OCI-LY7 (cell line): ENCODE measurements at regions of chr5 and their contacts with region 1.

Region 1: GRCh38 chr5:1140171-1140817 is 28.4 kb upstream of the SLC12A7 start:
- DNase-seq: peak; percentile 90
- H3K4me3 ChIP-seq: no peak overlapping the region
- H3K27ac ChIP-seq: no peak overlapping the region
- H3K4me1 ChIP-seq: peaks cover 20% of the 10 kb centered on the region
- CTCF ChIP-seq: peak; percentile 92

Region 2: GRCh38 chr5:1052641-1053390 is 87.5 kb before region 1 on chr5:
- CTCF ChIA-PET with region 1: no interaction called
- POLR2A ChIA-PET with region 1: no interaction called
- intact Hi-C with region 1: loop called (anchors 1 kb)
- DNase-seq: peak; percentile 30
- H3K4me3 ChIP-seq: no peak overlapping the region
- H3K27ac ChIP-seq: no peak overlapping the region
- H3K4me1 ChIP-seq: no peaks in the 10 kb centered on the region
- CTCF ChIP-seq: peak; percentile 60

Region 3: DNA sequence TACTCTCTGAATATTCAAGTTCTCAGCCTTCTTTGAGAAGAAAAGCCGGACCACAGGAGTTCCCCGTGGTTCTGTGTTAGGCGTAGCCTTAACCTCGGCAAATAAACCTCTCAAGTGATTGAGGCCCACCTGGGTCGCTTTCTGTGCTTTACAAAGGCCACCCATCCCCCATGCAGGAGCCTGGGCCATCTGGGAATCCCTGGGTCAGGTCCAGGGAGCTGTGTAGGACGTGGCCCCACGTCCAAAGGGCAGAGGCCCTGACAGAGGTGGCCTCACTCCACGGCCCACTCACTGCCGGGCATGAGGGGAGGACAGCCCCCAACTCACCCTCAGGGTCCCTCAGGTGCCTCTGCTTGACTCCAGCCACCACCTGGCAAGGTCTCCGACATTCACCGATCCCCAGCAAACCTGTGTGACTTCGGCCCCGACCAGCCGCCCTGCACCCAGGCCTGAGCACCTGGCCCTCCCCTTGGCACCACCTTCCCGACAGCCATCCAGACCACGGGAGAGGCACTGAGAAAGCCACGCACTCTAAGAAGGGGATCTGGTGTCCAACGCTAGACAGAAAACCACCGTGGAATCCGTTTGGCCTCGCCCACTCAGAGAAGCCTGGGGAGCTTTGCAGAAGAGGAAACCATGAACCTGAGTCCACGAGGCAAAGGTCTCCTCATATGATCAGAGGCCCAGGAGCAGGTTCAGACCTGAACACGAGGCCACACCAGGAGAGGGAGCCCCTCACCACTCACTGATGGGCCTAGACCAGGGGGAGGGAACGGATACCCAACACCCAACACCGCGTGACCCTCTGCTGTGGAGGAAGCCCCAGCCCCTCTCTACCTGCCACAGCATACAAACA is 32.9 kb before region 1 on chr5:
- CTCF ChIA-PET with region 1: no interaction called
- POLR2A ChIA-PET with region 1: interaction called, 3 read pairs
- intact Hi-C with region 1: loop called (anchors 1 kb)
- DNase-seq: peak; percentile 37
- H3K4me3 ChIP-seq: no peak overlapping the region
- H3K27ac ChIP-seq: no peak overlapping the region
- H3K4me1 ChIP-seq: no peaks in the 10 kb centered on the region
- CTCF ChIP-seq: peak; percentile 50; the same call in 1 of the 2 replicates